ENCODE measurements at regions of chr16 and their contacts with region 1.

Region 1: GRCh38 chr16:54929090-54930004 is 1.3 kb upstream of the IRX5 start:
- DNase-seq: peak; percentile 99 to 100
- H3K4me3 ChIP-seq: peak overlapping the region; percentile 61 to 73 (median 70)
- H3K27ac ChIP-seq: peak overlapping the region; percentile 90 to 98 (median 97)
- H3K4me1 ChIP-seq: peaks cover 18 to 68% (median 45%) of the 10 kb centered on the region in 4 donors
- H3K27me3 ChIP-seq: peaks cover 19 to 100% (median 59%) of the 10 kb centered on the region in 3 donors
- CTCF ChIP-seq: peak in 2 of 7 experiments; percentile 13 to 34
- EP300 ChIP-seq: no peak
- POLR2A ChIP-seq: peak in 2 of 4 donors; percentile 31 to 41

Region 2: GRCh38 chr16:54286090-54286993 is 643.0 kb before region 1 on chr16 and contains the start of gene IRX3:
- intact Hi-C with region 1: loop called (anchors 10 kb)
- DNase-seq: peak; percentile 88
- H3K4me3 ChIP-seq: peak within 1 kb of the TSS; percentile 58 to 75 (median 66)
- H3K27ac ChIP-seq: peak within 1 kb of the TSS; percentile 86 to 90 (median 88)
- H3K4me1 ChIP-seq: peaks cover 45 to 85% (median 65%) of the 10 kb centered on the region in 4 donors
- H3K27me3 ChIP-seq: peaks cover 21 to 100% (median 98%) of the 10 kb centered on the region in 3 donors
- CTCF ChIP-seq: no peak
- EP300 ChIP-seq: no peak
- POLR2A ChIP-seq: peak in 2 of 4 donors; percentile 23 to 86
- total RNA-seq, gene IRX3: 0.58 to 42.4 (median 7.6) TPM in 4 of 5 donors, not detected in the other

Region 3: GRCh38 chr16:55030944-55031343 is 101.6 kb after region 1 on chr16:
- intact Hi-C with region 1: no loop called
- DNase-seq: no peak
- H3K4me3 ChIP-seq: no peak overlapping the region
- H3K27ac ChIP-seq: no peak overlapping the region
- H3K4me1 ChIP-seq: no peaks in the 10 kb centered on the region
- H3K27me3 ChIP-seq: peaks cover 0 to 20% (median 4%) of the 10 kb centered on the region in 3 donors
- CTCF ChIP-seq: no peak
- EP300 ChIP-seq: no peak
- POLR2A ChIP-seq: no peak